GM18951 (cell line): ENCODE measurements at regions of chr12 and their contacts with region 1.

Region 1: GRCh38 chr12:94867066-94867855 is 136.2 kb downstream of the NDUFA12 start:
- POLR2A ChIP-seq: no peak

Region 2: GRCh38 chr12:94525951-94526350 is 341.3 kb before region 1 on chr12:
- in situ Hi-C with region 1: no loop called
- POLR2A ChIP-seq: no peak

Region 3: GRCh38 chr12:94603434-94604365 is 263.6 kb before region 1 on chr12:
- in situ Hi-C with region 1: no loop called
- POLR2A ChIP-seq: no peak

Region 4: GRCh38 chr12:94725375-94726168 is 141.7 kb before region 1 on chr12:
- in situ Hi-C with region 1: no loop called
- POLR2A ChIP-seq: no peak

Region 5: DNA sequence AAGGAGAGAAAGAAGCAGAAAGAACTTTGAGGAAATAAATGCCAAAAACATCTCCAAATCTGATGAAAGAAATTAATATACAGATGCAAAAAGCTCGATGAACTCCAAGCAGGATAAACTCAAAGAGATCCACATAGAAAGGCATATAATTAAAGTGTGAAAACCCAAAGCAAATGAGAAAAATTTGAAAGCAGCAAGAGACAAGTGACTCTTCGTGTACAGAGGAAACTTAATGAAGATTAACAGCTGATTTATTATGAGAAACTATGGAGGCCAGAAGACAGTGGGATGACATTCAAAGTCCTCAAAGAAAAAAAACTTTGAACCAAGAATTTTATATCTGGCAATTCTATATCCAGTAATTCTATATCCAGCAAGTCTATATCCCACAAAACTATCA is 53.9 kb before region 1 on chr12:
- in situ Hi-C with region 1: loop called (anchors 10 kb)
- POLR2A ChIP-seq: no peak